GM10248 (cell line): ENCODE measurements at regions of chr6 and their contacts with region 1.

Region 1: GRCh38 chr6:217048-217659 is 75.1 kb upstream of the DUSP22 start:
- DNase-seq: no peak
- CTCF ChIP-seq: peak; percentile 50

Region 2: DNA sequence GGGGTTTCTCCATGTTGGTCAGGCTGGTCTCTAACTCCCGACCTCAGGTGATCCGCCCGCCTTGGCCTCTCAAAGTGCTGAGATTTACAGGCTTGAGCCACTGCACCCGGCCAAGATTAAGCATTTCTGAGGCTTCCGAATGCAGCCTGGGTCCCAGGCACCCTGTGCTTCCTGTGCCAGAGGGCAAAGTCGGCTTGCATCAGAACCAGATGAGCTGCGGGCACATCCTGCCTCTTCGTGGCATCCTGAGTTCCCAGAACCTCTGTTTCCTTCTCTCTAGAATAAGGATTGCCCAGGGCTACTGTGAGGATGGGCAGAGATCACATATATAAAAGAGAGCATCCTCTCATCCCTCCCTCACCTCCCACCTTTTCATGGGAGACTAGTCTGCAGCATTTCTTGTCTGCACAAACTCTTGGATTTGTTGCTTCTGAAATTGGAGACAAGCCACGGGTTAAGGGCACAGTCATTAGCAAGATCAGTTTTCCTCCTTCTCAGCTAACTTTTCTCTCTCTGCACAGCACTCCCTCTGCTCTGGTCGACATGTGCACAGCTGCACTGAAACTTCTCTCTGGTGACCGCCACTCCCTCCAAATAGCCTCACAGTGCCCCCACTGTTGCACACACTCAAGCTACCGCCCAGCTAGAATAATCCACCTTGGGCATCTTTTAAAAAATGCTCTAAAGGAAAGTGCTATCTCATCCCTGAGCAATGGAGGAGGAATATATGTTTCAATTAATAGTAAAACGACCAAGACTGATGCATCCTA is 24.1 kb after region 1 on chr6:
- CTCF ChIA-PET with region 1: no interaction called
- POLR2A ChIA-PET with region 1: no interaction called
- DNase-seq: no peak
- CTCF ChIP-seq: no peak

Region 3: DNA sequence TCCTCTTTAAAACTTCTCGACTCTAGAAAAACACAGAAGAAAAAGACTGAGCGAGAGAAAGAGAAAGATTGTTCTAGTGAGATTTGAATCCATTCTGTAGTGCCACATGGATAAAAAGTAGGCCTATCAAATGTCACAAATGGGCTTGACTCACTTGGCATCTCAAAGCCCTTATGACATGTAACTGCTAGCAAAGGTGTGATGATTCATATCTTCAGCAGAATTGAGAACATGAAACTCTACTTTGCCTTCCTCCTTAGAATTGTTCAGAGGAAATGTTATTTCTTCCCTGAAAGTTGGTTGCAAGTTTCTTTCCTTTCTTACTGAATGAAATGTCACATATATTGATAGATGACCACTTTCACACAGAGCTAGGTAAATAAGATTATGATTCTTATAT is 34.8 kb after region 1 on chr6:
- CTCF ChIA-PET with region 1: interaction called, 11 read pairs
- POLR2A ChIA-PET with region 1: no interaction called
- DNase-seq: no peak
- CTCF ChIP-seq: no peak

Region 4: GRCh38 chr6:305371-306206 is 88.4 kb after region 1 on chr6:
- CTCF ChIA-PET with region 1: interaction called, 20 read pairs
- POLR2A ChIA-PET with region 1: interaction called, 3 read pairs
- DNase-seq: peak; percentile 93
- CTCF ChIP-seq: no peak

Region 5: DNA sequence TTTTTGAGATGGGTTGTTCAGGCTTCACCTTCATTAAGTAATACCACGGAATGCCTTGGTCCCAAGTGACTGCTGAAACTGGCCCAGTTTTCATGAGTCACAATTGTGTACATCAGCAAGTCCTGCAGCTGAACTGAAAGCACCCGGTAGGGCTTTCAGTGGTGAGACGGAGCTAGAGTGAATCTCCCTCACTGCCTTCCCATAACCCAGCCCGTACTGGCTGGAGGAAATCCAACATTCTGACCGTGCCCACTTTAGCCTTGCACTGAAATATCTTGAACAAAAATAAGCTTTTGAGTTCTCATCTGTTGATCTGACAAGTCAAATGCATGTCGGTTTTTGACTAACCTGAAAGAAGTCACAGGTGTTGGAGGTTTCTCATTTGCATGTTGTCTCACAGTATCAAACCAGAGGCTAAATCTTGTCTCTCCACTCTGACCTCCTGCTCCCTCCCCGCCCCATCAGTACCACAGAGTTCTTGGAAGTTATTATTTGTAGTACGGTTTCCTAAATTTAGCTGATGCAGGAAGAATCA is 111.0 kb after region 1 on chr6:
- CTCF ChIA-PET with region 1: interaction called, 14 read pairs
- POLR2A ChIA-PET with region 1: interaction called, 3 read pairs
- DNase-seq: peak; percentile 84
- CTCF ChIP-seq: no peak